Posterior cingulate gyrus (tissue), 11 donors: ENCODE measurements at regions of chr9 and their contacts with region 1.

Region 1: DNA sequence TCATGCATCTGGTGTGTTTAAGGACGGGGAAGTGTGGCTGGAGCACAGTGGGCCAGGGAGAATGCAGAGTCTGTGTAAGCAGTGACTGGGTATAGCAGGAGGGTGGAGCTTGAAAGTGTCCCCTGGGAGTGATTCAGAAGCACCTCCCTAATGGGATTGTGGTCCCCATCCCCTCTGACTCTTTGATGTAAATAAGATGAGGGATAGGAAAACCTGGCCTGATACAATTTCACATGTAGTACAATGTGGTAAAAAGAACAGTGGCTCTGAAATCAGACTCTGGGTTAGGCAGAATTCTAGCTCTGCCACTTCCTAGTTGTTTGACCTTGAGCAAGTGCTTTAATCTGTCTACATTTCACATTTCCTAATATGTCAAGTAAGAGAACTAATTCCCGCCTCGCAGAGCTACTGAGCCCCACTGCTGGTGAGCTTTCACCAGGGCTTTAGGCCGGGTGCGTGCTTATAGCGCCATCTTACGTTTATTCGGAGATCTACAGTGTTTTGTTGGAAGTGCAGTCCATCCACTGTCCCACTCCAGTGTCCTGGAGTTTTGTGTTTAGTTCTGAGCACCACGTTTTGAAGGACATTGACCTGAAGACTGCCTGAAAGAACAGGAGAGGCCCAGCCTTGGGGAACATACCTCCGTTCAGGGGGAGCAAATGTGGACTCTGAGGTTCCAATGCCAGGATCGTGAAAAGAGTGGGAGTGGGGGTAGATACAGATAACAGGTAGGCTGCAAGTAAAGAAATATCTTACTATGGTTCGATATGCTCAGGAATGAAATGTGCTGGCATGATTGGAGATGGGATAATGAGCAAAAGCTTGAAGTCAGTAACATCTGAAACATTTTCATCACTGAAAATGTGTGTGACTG is 51.2 kb upstream of the TESK1 start:
- DNase-seq: peak in 7 of 10 donors; percentile 58 to 95 (median 74)

Region 2: GRCh38 chr9:35116898-35117551 is 436.9 kb before region 1 on chr9:
- intact Hi-C with region 1: loop called (anchors 5 kb)
- DNase-seq: peak; percentile 80 to 98 (median 91)

Region 3: DNA sequence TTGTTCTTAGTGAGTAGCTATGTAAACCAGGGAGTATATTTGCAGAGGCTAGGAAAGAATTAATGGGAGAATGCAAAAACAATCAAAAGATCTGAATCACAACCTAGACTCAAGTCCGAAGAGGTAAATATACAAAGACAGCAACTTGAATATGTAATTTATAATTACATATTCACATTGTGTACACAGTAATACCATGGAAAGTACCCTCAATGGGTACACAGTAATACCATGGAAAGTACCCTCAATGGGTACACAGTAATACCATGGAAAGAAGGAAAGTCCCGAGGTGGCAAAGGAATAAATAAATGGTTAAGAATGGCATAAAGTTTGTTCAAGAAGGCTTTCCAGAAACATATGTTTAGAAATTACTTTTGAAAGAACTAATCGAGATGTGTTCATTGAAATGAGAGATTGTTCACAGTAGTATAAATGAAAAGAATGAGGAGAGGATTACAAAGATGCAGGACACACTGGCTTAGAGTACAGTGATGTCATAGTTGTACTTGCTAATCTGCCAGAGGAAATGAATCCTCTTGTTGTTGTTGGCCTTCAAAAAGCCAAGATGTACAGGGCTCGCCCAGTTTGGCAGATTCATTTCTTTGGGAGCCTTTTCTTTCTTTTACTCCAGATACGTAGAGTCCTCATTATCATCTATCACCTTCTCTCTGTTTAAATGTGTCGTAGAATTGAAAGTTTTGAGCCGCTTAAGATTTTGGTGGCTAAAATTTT is 276.1 kb before region 1 on chr9:
- intact Hi-C with region 1: loop called (anchors 10 kb)
- DNase-seq: no peak

Region 4: DNA sequence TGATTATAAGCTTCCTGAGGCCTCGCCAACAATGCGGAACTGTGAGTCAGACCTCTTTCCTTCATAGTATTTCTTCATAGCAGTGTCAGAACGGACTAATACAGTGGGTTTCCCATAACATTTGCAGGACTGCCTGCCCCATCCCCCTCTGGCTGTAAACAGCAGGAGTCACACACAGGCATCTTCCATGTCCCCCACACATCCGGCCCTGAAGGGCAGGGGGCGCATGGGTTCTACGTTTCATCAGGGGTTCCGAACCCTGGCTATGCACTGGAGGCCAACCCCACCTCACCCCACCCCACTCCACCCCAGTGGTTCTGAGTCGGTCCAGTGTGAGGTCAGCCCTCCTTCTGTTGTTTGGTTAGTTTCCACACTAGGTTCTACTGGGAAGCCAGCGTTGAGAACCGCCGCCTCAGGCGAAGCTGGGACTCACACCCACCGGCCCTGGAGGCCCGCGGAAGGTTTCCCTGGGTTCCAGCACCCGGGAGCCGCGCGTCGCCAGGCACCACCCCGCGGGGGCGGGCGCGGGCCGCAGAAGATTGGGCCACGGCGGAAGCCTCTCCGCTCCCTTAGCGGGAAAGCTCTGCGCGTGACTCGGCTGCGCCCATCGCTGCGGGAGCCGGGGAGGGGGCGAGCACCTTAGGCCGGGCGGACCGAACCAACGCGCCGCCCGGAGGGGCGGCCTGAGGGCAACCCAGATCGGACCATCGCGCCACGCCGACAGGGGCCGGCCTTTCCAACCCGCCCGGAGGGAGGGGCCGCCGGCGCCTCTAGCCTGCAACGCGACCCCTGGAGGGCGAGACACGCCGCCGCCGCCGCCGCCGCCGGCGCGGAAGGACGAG is 64.4 kb before region 1 on chr9 and contains the start of gene RUSC2:
- intact Hi-C with region 1: loop called (anchors 1 kb)
- DNase-seq: peak; percentile 65 to 97 (median 79)

Region 5: DNA sequence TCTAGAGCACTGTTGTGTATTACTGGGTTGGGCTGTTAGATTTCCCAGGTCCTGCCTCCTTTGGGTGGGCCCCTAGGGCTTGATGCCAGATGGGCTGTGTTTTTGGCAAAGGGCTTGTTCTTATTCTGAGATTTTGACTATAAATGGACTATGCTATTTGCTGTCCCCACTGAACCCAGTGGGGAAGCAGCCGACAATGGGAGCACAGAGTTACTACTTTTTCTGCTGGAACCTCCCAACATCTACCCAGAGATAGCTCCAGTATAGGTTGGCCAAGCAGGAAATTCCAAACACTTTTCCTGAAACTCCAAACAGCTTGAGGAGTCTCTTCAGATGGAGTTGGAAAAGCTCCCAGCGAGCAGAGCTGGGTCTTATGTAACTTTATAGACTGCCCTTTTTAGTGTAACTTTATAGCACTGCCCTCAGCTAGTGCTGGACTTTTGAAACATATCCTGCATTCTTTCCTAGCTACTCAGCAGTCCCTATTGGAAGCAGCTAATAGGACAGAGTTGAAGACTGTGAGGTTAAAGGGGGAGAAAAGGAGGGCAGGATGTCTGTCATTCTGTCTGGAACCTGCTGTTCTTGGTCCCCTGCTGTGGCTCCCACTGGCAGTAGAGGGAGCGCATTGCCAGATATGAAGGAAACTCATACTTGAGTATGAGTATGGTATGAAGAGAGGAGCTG is 43.0 kb before region 1 on chr9:
- intact Hi-C with region 1: loop called (anchors 5 kb)
- DNase-seq: peak in 1 of 10 donors; percentile 58

Region 6: DNA sequence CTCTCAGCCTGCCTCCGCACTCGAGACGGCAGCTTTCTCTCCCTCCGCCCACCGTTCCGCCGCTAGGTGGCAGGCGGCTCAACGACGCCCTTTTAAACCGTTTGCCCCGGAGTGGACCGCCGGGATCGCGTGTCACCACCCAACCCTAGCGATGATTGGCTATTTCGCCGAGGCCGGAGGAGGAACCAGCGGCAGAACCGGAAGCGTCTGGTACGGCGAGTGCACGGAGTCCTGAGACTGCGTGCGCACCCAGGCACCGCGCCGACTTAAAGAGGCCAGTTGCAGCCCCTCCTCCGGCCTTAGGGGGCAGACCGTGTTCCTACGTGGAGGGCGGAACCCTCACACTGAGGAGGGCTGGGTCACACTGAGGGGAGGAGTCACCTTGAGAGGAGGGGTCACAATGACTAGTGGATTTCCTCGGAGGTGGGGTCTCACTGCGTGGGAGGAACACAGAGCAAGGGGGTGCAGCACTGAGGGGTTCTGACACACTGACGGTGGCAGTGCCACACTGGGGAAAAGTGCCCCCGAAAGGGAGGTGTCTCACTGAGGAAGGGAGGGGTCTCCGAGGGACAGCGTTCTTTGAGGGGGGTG is 50.2 kb after region 1 on chr9:
- intact Hi-C with region 1: loop called (anchors 5 kb)
- DNase-seq: peak; percentile 98 to 100 (median 99)